ENCODE measurements at regions of chr2 and their contacts with region 1.

Region 1: DNA sequence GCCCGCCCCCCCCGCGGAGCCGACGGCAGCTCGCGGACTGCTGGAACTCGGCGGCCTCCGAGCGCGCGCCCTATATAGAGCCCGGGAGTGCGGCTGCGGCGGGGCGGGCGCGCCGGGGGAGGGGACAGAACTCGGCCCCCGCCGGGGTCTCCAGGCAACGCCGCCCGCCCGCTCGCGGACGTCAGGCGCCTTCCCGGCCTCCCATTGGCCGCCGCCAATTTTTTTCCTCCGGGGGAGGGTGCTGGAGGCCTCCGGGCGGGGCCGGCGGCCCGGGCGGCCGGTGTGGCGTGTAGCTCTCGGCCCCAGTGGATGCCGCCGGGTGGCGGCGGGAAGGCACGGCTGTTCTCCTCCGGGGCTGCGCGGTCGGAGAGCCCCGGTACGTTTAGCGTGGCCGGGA is at the start of gene ZFP36L2:
- DNase-seq: peak; percentile 96
- H3K4me3 ChIP-seq: peak within 1 kb of the TSS; percentile 84 to 97
- H3K27ac ChIP-seq: peak within 1 kb of the TSS; percentile 92 to 100
- H3K4me1 ChIP-seq: peaks cover 25% of the 10 kb centered on the region
- H3K27me3 ChIP-seq: no peaks in the 10 kb centered on the region
- CTCF ChIP-seq: no peak
- POLR2A ChIP-seq: no peak
- total RNA-seq, gene ZFP36L2: 35.7 to 54.4 TPM

Region 2: DNA sequence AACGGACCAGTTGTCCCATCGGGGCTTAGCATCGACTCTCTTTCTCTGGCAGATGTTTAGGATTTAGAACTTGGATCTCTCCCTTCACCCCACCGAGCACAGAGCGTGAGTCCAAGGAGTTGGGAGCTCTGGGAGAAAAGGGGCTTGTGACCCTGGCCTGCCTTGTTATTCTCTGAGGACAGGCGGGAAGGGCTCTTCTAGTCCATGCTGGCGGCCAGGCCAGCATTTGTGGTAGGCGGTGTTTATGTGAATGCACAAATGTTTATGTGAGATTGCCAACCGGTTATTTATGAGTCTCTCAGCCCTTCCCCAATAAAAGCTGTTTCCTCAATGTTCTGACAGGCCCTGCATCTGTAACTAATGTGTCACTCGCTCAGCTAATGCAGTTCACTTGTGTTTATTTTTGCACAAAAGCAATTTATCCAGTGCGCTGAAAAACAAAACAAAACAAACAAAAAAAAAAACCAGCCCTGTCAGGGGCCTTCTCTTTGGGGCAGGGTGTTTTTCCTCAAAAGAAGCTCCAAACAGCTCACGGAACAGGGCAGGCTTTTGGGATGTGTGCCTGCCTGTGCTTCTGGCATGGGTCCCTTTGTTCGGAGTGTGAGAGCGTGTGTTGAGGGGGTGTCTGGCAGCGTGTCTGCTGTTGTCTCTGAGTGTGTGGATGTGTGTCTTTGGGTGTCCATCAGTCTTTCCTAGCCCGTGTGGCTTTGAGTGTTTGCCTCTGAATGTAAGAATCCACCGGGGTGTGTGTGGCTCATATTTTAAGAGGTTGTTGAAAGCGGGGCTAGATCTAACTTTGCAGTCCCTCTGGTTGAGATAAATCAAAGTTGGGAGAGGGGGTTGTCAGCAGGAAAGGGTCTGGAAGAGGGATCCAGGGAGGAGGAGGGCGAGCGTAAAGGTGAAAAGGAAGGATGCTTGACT is 381.4 kb before region 1 on chr2:
- intact Hi-C with region 1: loop called (anchors 10 kb)
- DNase-seq: peak; percentile 57
- H3K4me3 ChIP-seq: no peak overlapping the region
- H3K27ac ChIP-seq: peak overlapping the region in 1 of 2 donors; percentile 51
- H3K4me1 ChIP-seq: peaks cover 14% of the 10 kb centered on the region
- H3K27me3 ChIP-seq: no peaks in the 10 kb centered on the region
- CTCF ChIP-seq: no peak
- POLR2A ChIP-seq: no peak

Region 3: DNA sequence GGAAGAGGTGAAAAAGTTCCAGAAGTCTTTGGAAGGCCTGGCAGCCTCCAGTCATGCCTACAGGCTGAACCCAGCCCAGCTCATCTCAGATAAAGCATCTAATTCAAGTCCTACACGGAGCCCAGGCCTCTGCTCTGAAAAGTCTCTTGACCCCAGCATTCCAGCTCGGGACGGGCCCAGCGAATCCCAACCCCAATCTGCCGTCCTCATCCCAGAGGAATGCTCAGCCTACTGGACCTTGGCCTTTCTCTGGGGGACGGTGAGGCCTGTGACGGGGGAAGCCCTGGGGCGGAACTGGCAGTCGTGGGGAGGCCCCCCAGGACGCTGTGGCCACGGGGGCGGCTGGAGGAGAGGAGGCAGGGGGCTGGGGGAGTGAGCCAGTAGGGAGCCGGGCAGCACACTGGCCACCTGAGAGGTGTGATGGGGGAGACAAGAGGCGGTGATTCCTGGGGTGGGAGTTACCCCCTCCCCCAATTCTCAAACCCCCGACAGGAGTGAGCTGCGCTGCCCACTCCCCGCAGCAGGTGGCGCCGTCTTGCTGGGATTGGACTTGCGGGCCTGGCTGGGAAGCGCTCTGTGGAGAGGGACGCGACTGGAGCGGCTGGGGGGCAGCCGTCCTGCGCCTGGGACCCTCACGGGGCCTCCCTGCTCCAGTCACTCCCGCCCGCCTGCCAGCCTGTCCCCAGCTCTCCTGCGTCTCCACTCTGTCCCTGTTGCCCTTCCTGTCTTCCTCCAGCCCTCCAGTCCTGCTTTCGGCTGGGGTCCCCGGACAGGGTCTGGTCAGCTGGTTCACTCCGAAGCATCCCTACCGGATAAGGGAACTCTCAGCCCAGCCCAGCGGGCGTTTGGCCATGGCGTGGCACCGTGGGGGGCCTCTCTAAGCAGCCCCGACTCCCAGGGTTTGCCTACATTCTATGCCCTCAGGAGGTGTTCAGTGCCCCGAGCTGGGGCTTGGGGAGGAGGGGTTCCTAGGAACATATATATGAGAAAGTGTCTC is 251.5 kb before region 1 on chr2:
- intact Hi-C with region 1: loop called (anchors 5 kb)
- DNase-seq: peak; percentile 88
- H3K4me3 ChIP-seq: peak overlapping the region; percentile 46 to 51
- H3K27ac ChIP-seq: peak overlapping the region; percentile 77 to 84
- H3K4me1 ChIP-seq: peaks cover 25% of the 10 kb centered on the region
- H3K27me3 ChIP-seq: no peaks in the 10 kb centered on the region
- CTCF ChIP-seq: peak; percentile 87 to 95 (median 93)
- POLR2A ChIP-seq: no peak

Region 4: GRCh38 chr2:43194121-43194869 is 32.3 kb before region 1 on chr2:
- intact Hi-C with region 1: no loop called
- DNase-seq: no peak
- H3K4me3 ChIP-seq: no peak overlapping the region
- H3K27ac ChIP-seq: no peak overlapping the region
- H3K4me1 ChIP-seq: no peaks in the 10 kb centered on the region
- H3K27me3 ChIP-seq: no peaks in the 10 kb centered on the region
- CTCF ChIP-seq: no peak
- POLR2A ChIP-seq: no peak

Region 5: DNA sequence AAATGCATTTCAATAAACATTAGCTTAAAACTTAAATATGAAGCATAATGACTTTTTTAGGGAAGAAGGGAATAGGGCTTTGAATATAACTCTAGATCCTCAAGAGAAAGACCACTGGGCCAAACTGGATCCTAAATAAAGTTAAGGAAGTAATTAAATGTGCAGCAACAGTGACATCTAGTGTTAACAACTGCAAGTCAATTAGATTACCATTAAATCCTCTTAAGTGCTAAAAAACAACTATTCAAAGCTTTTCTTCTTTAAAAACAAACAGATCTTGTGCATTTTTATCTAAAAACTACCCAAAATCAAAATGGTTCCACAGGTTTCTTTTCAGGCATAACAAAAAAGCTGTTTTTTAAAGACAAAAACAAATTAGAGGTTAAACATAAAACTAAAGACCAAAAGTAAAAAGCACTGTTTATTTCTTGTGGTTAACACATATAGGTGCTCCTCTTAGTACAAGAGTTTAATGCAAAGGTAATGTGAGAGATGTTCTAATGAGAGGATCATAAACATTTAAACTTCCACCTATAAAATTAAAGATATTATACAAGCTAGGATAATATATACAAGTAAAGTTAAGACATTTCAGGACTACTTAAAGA is 257.9 kb after region 1 on chr2:
- intact Hi-C with region 1: loop called (anchors 10 kb)
- DNase-seq: no peak
- H3K4me3 ChIP-seq: no peak overlapping the region
- H3K27ac ChIP-seq: peak overlapping the region in 1 of 2 donors; percentile 21
- H3K4me1 ChIP-seq: peaks cover 15% of the 10 kb centered on the region
- H3K27me3 ChIP-seq: no peaks in the 10 kb centered on the region
- CTCF ChIP-seq: peak; percentile 43 to 60 (median 57)
- POLR2A ChIP-seq: no peak

Measured in testis (tissue), 5 donors.